AG04450 (cell line): ENCODE measurements at regions of chr3 and their contacts with region 1.

Region 1: DNA sequence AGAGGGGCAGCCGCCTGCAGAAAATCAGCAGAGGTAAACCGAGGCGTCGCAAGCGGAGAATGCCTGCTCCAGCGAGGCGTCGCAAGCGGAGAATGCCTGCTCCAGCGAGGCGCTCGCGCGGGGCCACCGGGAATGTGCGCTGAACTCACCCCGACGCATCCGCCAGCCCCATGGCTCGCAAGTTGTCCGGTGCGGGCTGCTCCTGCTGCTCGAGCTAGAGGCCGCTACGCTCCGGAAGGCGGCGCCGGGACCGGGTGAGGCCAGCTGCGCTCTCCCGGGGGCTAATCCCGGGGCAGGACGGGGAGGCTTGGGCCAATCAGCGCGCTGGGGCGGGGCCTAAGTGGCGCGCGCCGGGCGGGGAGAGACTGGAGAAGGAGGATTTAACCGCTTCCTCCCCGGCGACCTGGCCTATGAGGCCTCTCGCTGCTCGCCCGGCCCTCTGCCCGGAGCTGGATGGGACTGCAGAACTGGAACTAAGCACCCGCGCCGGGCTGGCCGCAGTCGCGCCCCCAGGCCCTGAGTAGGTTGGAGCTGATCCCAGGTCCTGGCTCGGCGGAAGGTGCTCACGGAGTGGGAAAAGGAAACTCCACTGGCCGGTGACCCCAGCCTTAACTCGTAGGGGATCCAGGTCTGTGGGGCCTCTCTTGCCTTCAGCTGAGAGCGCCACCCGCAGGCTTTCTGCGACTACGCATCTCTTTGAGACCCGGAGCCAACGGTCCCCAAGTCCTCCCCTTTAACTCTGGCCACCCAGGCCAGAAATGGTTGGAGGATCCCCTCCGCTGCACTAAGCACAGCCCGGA is at the start of gene SLC26A6:
- DNase-seq: peak; percentile 90
- H3K4me3 ChIP-seq: peak within 1 kb of the TSS; percentile 86
- H3K27ac ChIP-seq: peak within 1 kb of the TSS; percentile 65
- H3K27me3 ChIP-seq: peaks cover 6% of the 10 kb centered on the region
- CTCF ChIP-seq: peak; percentile 72
- polyA plus RNA-seq, gene SLC26A6: 22.2 and 23.1 TPM in 2 replicates

Region 2: DNA sequence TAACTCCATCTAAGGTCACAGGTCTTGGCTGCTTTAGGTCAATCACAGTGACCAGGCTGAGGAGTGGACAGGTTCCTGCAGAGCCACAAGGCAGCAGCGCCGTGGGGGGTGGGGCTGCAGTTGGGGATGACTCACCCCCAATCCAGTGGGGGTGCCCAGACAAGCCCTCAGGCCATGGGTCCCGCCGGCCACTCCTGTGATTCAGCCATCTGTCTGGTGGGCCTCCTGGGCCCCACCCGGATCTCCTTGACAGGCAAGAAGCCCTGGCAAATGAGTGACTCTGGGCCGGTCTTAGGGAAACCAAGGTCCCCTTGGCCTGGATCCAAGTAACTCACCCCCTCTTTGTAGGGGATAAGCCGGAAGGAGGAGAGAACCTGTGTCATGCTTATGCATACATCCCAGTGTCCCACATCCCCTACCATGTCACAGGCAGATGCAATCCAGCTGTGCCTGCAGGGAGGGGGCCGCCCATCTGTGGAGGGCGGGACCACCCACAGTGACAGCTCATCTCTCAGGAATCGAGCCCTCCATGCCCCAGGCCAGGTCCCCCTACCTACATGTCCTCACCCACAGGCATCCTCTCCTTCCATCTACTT is 39.8 kb before region 1 on chr3:
- CTCF ChIA-PET with region 1: interaction called, 3 read pairs
- POLR2A ChIA-PET with region 1: interaction called, 14 read pairs
- DNase-seq: peak; percentile 48
- H3K4me3 ChIP-seq: peak overlapping the region; percentile 65
- H3K27ac ChIP-seq: peak overlapping the region; percentile 99
- H3K27me3 ChIP-seq: no peaks in the 10 kb centered on the region
- CTCF ChIP-seq: no peak

Region 3: DNA sequence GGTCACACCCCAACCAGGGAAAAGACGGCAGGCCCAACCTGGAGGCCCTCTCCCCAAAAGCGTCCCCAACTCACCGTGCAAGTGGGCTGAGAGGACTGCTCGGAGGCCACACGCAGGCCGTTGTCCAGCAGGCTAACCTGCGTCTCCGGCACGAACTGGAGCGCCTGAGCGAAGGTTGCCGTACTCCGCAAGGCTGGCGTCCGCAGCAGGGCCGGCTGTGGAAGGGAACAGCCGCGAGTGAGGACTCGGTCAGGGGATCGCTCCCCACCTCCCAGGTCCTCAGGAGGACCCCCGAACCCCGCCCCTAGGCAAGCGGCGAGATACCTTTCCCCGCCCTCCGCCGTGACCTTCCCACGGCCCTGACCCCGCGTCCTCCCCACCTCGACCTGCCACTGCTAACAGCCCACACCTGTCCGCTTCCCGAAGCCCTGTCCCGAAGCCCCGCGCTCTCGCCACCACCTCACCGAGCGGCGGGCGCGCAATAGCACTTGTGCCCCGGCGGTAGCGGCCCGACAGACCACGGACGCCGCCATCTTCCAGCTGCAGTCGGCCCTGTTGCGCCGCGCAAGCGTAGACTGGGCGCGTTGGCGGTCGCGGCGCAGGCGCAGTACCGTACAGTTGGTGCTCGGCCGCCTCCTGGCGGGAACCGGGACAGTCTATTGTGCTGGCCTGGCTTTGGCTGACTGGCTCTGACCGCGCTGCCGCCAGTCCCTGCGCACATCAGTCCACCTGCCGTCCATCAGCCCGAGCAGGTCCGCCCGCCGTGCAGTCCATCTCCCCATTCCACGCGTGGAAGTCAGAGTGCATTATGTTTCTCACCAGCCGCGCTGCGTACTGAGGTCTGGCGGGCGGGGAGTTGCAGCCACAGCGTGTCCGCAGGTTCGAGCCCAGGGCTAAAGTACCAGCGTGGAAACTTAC is 26.1 kb before region 1 on chr3 and contains the start of gene UQCRC1:
- CTCF ChIA-PET with region 1: interaction called, 18 read pairs
- POLR2A ChIA-PET with region 1: interaction called, 13 read pairs
- DNase-seq: peak; percentile 82
- H3K4me3 ChIP-seq: peak within 1 kb of the TSS; percentile 99
- H3K27ac ChIP-seq: peak within 1 kb of the TSS; percentile 11
- H3K27me3 ChIP-seq: no peaks in the 10 kb centered on the region
- CTCF ChIP-seq: peak; percentile 72
- polyA plus RNA-seq, gene UQCRC1: 379 and 468 TPM in 2 replicates

Region 4: GRCh38 chr3:48623851-48624547 is 11.4 kb before region 1 on chr3:
- CTCF ChIA-PET with region 1: interaction called, 13 read pairs
- POLR2A ChIA-PET with region 1: interaction called, 19 read pairs
- DNase-seq: no peak
- H3K4me3 ChIP-seq: no peak overlapping the region
- H3K27ac ChIP-seq: peak overlapping the region; percentile 11
- H3K27me3 ChIP-seq: no peaks in the 10 kb centered on the region
- CTCF ChIP-seq: no peak

Region 5: GRCh38 chr3:48663415-48664312 is 28.2 kb after region 1 on chr3:
- CTCF ChIA-PET with region 1: interaction called, 13 read pairs
- POLR2A ChIA-PET with region 1: interaction called, 12 read pairs
- DNase-seq: peak; percentile 98
- H3K4me3 ChIP-seq: peak overlapping the region; percentile 66
- H3K27ac ChIP-seq: peak overlapping the region; percentile 98
- H3K27me3 ChIP-seq: peaks cover 9% of the 10 kb centered on the region
- CTCF ChIP-seq: peak; percentile 74

Region 6: GRCh38 chr3:48997714-48998641 is 362.6 kb after region 1 on chr3:
- CTCF ChIA-PET with region 1: no interaction called
- POLR2A ChIA-PET with region 1: no interaction called
- DNase-seq: no peak
- H3K4me3 ChIP-seq: no peak overlapping the region
- H3K27ac ChIP-seq: no peak overlapping the region
- H3K27me3 ChIP-seq: no peaks in the 10 kb centered on the region
- CTCF ChIP-seq: no peak